ENCODE measurements at regions of chr11 and their contacts with region 1.

Region 1: GRCh38 chr11:86869966-86870570 is 69.7 kb downstream of the PRSS23 start:
- DNase-seq: peak; percentile 13
- H3K4me3 Mint-ChIP-seq: no peak overlapping the region
- H3K27ac Mint-ChIP-seq: no peak overlapping the region
- H3K4me1 Mint-ChIP-seq: no peaks in the 10 kb centered on the region
- H3K27me3 Mint-ChIP-seq: peaks cover 12% of the 10 kb centered on the region

Region 2: DNA sequence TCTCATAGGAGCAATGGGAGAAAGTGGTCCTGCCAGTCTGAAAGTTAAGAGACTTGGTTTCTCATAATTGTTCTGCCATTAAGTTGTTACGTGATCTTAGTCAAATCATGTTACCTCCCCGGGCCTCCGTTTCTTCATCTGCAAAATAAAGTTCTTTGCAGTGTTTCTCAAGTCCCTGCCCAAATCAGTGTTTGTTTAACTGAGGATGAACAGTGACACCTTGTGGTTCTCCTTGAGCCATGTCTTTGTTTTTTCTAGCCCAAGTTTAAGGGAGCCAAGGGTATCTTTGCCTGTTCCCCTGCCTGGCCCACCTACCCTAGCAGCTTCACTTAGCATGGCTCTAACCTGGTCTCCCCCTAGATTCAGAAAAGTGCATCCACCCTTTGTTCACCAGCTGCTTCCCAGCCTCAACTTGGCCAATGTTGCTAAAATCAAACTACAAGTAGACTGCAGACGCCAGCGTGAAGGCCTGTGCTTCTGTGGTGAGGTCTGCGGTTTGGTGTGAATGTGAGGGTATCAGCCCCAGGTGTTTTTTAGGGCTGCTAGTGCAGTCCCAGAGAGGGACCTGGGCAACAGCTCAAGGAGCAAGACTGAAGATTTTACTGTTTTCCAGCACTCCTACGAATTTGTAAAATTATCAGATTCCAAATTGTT is 49.6 kb after region 1 on chr11:
- intact Hi-C with region 1: loop called (anchors 1 kb)
- DNase-seq: no peak
- H3K4me3 Mint-ChIP-seq: no peak overlapping the region
- H3K27ac Mint-ChIP-seq: no peak overlapping the region
- H3K4me1 Mint-ChIP-seq: peaks cover 6% of the 10 kb centered on the region
- H3K27me3 Mint-ChIP-seq: peaks cover 15% of the 10 kb centered on the region

Region 3: DNA sequence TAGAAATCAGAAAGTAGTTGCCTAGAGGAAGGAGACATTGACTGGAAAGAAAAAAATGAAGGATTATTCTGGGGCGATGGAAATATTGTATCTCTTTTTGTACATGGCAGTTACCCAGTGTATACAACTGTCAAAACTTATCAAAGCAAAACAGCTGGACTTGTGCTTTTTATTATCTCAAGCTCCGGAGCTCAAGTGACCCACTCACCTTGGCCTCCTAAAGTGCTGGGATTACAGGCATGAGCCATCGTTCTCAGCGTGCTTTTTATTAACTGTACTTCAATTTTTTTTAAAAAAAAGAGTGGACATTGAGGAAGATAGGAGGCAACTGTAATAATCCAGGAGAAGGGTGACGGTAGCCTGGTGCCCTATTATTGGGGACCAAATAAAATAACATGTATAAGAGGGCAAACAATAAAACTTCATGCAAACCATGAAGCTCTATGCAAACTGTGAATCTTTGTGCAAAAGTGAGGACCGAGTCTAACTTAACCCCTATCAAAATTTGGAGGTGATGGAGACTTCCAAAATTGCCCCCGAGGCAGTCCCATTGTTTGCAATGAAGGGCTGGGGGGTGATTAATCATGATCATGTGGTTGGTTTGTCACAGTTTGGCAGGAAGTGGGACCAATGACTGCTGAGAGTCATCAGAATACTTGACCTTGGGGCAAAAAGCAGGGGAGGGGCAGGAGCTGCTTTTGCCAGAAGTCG is 61.6 kb after region 1 on chr11:
- intact Hi-C with region 1: no loop called
- DNase-seq: no peak
- H3K4me3 Mint-ChIP-seq: no peak overlapping the region
- H3K27ac Mint-ChIP-seq: no peak overlapping the region
- H3K4me1 Mint-ChIP-seq: no peaks in the 10 kb centered on the region
- H3K27me3 Mint-ChIP-seq: peaks cover 3% of the 10 kb centered on the region

Region 4: GRCh38 chr11:87398931-87399330 is 528.9 kb after region 1 on chr11:
- intact Hi-C with region 1: no loop called
- DNase-seq: no peak
- H3K4me3 Mint-ChIP-seq: no peak overlapping the region
- H3K27ac Mint-ChIP-seq: no peak overlapping the region
- H3K4me1 Mint-ChIP-seq: no peaks in the 10 kb centered on the region
- H3K27me3 Mint-ChIP-seq: peaks cover 5% of the 10 kb centered on the region

Region 5: DNA sequence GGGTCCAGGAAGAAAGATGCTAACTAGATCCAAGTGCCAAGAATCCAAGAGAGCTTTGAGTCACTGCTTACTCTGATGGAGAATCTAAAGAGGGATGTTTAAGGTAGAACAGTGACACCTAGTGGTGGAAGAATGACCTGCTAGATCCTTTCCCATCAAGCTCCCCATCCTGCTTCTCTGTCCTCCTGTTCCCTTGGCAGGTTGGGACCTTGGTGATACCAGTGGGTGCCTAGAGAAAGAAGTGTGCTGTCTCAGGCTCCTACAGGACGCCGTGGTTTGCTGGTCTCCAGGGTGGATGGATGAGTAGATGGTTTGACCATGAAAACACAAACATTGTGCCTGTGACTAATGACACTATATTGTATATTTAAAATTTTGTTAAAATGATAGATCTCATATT is 551.4 kb after region 1 on chr11:
- intact Hi-C with region 1: loop called (anchors 1 kb)
- DNase-seq: peak; percentile 2
- H3K4me3 Mint-ChIP-seq: no peak overlapping the region
- H3K27ac Mint-ChIP-seq: no peak overlapping the region
- H3K4me1 Mint-ChIP-seq: no peaks in the 10 kb centered on the region
- H3K27me3 Mint-ChIP-seq: peaks cover 5% of the 10 kb centered on the region

Measured in activated T-helper 1 cell treated with anti-CD3 and anti-CD28 coated beads, Interleukin-12 subunit alpha, Interleukin-12 subunit beta, Interleukin-2, Interleukin-4 antibody, amounts not matched to agents 30 ng/mL and 10 ng/mL and 1 ng/mL, durations not matched to agents 14 hours and 24 hours and 36 hours (primary cell).